Naive thymus-derived CD4-positive, alpha-beta T cell (primary cell): ENCODE measurements at regions of chrX and their contacts with region 1.

Region 1: GRCh38 chrX:136572030-136572429 is 40.0 kb downstream of the VGLL1 start:
- DNase-seq: peak in 3 of 9 donors; percentile 1 to 29 (median 6)
- ATAC-seq: no peak
- H3K4me3 ChIP-seq: no peak overlapping the region
- H3K4me3 Mint-ChIP-seq: peak overlapping the region in 3 of 10 donors; percentile 12 to 25 (median 24)
- H3K27ac ChIP-seq: no peak overlapping the region
- H3K27ac Mint-ChIP-seq: peak overlapping the region in 2 of 9 donors; percentile 25 to 59
- H3K4me1 ChIP-seq: peaks cover 4 to 8% of the 10 kb centered on the region in 2 donors
- H3K4me1 Mint-ChIP-seq: peaks cover 0 to 11% (median 9%) of the 10 kb centered on the region in 7 donors
- H3K27me3 ChIP-seq: no peaks in the 10 kb centered on the region
- H3K27me3 Mint-ChIP-seq: no peaks in the 10 kb centered on the region

Region 2: DNA sequence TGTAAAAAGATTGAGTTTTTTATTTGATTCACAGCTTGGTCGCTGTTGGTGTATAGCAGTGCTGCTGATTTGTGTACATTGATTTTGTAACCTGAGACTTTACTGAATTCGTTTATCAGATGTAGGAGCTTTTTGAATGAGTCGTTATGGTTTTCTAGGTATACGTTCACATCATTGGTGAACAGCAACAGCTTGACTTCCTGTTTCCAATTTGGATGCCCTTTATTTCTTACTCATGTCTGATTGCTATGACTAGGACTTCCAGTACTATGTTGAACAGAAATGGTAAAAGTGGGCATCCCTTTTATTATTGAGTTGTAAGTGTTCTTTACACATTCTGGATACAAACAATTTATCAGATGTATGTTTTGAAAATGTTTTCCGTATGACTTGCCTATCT is 195.3 kb before region 1 on chrX:
- CTCF ChIA-PET with region 1: no interaction called
- POLR2A ChIA-PET with region 1: no interaction called
- intact Hi-C with region 1: no loop called
- DNase-seq: no peak
- ATAC-seq: no peak
- H3K4me3 ChIP-seq: no peak overlapping the region
- H3K4me3 Mint-ChIP-seq: no peak overlapping the region
- H3K27ac ChIP-seq: no peak overlapping the region
- H3K27ac Mint-ChIP-seq: no peak overlapping the region
- H3K4me1 ChIP-seq: no peaks in the 10 kb centered on the region
- H3K4me1 Mint-ChIP-seq: peaks cover 0 to 2% (median 0%) of the 10 kb centered on the region in 7 donors
- H3K27me3 ChIP-seq: no peaks in the 10 kb centered on the region
- H3K27me3 Mint-ChIP-seq: peaks cover 0 to 13% (median 6%) of the 10 kb centered on the region in 5 donors

Region 3: GRCh38 chrX:136525738-136526606 is 46.1 kb before region 1 on chrX:
- CTCF ChIA-PET with region 1: no interaction called
- POLR2A ChIA-PET with region 1: no interaction called
- intact Hi-C with region 1: no loop called
- DNase-seq: no peak
- ATAC-seq: no peak
- H3K4me3 ChIP-seq: no peak overlapping the region
- H3K4me3 Mint-ChIP-seq: no peak overlapping the region
- H3K27ac ChIP-seq: no peak overlapping the region
- H3K27ac Mint-ChIP-seq: no peak overlapping the region
- H3K4me1 ChIP-seq: no peaks in the 10 kb centered on the region
- H3K4me1 Mint-ChIP-seq: peaks cover 6 to 16% (median 12%) of the 10 kb centered on the region in 7 donors
- H3K27me3 ChIP-seq: no peaks in the 10 kb centered on the region
- H3K27me3 Mint-ChIP-seq: peaks cover 0 to 6% (median 0%) of the 10 kb centered on the region in 5 donors

Region 4: DNA sequence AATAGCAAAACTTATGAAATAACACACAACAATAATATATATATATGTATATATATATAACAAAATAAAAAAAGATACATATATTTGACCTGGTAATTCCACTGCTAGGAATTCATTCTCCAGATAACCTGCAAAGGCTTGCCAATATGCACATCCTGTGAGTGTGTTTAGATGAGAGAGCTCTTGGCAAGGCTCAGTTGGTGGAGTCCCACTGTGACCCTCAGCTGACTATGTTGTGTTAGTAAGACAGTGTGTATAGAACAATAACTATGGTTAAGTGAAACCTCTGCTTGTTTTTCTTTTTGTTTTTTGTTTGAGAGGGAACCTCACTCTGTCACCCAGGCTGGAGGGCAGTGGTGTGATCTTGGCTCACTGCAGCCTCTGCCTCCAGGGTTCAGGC is 348.0 kb after region 1 on chrX:
- CTCF ChIA-PET with region 1: interaction called, 4 read pairs
- POLR2A ChIA-PET with region 1: no interaction called
- intact Hi-C with region 1: loop called in 1 of 2 experiments (anchors 1 kb)
- DNase-seq: no peak
- ATAC-seq: no peak
- H3K4me3 ChIP-seq: no peak overlapping the region
- H3K4me3 Mint-ChIP-seq: no peak overlapping the region
- H3K27ac ChIP-seq: no peak overlapping the region
- H3K27ac Mint-ChIP-seq: no peak overlapping the region
- H3K4me1 ChIP-seq: no peaks in the 10 kb centered on the region
- H3K4me1 Mint-ChIP-seq: peaks cover 0 to 2% (median 2%) of the 10 kb centered on the region in 7 donors
- H3K27me3 ChIP-seq: no peaks in the 10 kb centered on the region
- H3K27me3 Mint-ChIP-seq: no peaks in the 10 kb centered on the region